ENCODE measurements at regions of chr12 and their contacts with region 1.

Region 1: DNA sequence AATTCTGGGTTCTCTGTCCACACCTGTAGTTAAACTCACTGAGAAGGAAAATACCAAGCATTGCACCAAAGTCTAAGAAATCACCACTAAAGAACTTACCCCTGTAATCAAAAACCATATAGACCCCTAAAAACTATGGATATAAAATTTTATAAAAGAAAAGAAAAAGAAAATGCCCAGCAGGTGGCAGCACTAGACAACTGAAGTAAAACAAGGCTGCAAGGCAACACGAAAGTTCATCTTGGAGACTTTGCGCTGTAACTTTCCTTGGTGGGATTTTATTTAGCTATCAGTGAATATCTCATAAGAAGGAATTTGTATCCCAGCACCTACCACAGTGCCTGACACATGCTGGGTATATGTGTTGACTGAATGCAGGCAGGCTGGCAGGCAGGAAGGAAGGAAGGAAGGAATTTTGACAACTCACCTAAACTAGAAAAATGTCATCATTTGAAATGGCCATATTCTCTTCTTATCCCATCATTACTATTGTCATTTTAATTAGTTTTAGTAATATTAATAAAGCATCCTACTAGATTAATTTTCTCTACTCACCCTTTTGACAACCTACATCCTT is 68.2 kb upstream of the ETV6 start:
- DNase-seq: peak; percentile 83

Region 2: GRCh38 chr12:11431486-11431885 is 149.8 kb before region 1 on chr12:
- in situ Hi-C with region 1: no loop called
- DNase-seq: no peak

Region 3: GRCh38 chr12:12032851-12033588 is 451.8 kb after region 1 on chr12:
- in situ Hi-C with region 1: loop called (anchors 25 kb)
- DNase-seq: peak; percentile 88

Region 4: DNA sequence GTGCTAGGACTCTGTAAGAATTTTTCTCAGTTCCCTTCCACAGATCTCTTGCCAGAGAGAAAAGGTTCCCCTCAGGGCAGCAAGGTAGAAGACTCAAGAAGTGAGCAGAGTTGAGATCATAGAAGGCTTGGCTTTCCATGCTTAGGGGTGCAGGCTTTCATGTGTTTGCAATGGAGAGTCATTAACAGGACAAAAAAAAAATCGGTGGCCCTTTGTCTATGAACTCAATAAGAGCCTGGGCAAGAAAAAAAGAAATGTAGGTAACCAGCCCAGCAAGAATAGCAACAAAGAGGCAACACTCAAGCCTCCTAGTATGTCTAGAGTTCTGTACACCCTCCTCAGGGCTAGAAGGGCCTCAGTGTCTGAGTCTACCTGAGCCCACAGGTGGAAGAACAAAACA is 708.9 kb after region 1 on chr12:
- in situ Hi-C with region 1: no loop called
- DNase-seq: no peak

Region 5: GRCh38 chr12:12334367-12335040 is 753.2 kb after region 1 on chr12:
- in situ Hi-C with region 1: loop called (anchors 25 kb)
- DNase-seq: peak; percentile 68

Measured in ACHN (cell line).